PC-9 (cell line): ENCODE measurements at regions of chr3 and their contacts with region 1.

Region 1: DNA sequence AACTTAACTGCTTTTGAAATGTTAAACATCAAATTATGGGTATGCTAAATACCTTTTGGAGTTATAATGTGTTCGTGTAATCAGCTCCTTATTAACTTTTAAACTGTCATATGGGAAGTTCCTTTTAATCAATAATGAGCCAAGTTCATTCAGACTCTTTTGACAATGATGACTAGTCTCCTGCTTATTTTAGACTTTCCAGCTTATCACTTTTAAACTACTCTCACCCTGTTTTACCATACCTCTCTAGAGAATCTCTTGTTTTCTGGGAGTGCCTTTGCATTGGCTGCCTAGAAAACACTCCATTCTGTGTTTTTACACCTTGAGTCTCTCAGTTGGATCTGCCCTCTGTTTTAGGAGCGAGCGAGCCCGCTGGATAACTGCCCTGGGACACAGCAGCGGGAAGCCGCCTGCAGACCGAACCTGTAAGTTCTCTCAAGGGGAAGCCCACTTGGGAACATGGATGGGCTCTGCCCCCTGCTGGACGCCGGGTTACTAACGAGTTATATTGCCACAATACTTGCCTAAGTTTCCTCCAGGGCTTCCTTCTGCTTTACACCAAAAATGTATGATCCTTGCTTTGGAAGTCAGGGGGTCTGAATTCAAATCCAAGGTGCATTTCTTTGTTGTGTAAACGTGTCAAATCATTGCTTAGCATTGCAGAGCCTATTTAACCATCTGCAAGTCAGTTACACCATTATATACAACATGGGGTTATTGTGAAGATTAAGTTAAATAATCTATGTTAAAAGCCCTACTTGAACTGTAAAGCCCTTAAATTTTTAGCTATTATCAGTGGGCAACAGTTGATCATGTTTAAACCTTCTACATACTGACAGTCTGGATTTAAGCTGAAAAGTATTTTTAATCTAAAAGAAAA is 71.3 kb downstream of the DHX36 start:
- DNase-seq: peak; percentile 60 to 85
- H3K4me3 ChIP-seq: no peak overlapping the region
- H3K27ac ChIP-seq: no peak overlapping the region
- H3K4me1 ChIP-seq: no peaks in the 10 kb centered on the region
- H3K27me3 ChIP-seq: no peaks in the 10 kb centered on the region
- CTCF ChIP-seq: peak; percentile 95

Region 2: DNA sequence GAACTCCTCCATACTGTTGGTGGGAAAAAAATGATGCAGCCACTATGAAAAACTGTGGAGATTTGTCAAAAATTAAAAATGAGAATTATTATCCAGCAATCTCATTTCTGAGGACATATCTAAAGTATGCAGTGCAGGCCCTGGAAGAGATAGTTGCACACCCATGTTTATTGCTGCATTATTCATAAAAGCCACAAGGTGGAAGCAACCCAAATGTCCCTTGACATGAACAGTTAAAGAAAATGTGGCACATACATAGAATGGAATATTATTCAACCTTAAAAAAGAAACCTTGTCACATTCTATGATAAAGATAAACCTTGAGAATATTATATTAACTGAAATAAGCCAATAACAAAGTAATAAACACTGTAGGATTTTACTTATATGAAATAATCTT is 212.7 kb before region 1 on chr3:
- CTCF ChIA-PET with region 1: no interaction called
- POLR2A ChIA-PET with region 1: no interaction called
- intact Hi-C with region 1: loop called (anchors 1 kb)
- DNase-seq: no peak
- H3K4me3 ChIP-seq: no peak overlapping the region
- H3K27ac ChIP-seq: no peak overlapping the region
- H3K4me1 ChIP-seq: no peaks in the 10 kb centered on the region
- H3K27me3 ChIP-seq: no peaks in the 10 kb centered on the region
- CTCF ChIP-seq: peak; percentile 70

Region 3: DNA sequence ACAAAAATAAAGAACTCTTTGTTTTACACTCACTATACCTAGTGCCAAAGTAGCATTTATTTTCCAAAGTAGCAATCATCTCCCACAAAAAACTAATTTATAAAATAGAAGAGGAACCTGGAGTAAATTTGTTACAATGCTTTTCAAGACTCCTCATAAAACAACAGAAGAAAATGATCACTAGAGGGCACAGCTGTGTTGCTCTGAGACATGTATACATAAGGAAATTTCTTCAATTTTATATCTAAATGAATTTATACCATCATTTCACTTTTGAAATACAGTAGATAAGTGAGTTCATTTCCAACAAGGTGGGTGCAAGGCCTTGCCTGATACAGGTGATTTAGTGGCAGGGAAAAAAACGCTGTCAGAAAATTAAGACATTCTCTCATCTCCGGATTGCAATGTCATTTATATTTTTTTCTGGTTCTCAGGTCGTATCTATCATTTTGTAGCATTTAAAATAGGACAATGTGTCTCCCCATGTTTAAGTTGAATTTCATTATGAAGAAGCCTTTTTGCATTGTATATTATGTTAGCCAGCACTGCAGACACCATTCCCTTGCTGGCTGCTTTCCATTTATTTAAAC is 157.1 kb before region 1 on chr3:
- CTCF ChIA-PET with region 1: no interaction called
- POLR2A ChIA-PET with region 1: no interaction called
- intact Hi-C with region 1: loop called (anchors 1 kb)
- DNase-seq: no peak
- H3K4me3 ChIP-seq: no peak overlapping the region
- H3K27ac ChIP-seq: no peak overlapping the region
- H3K4me1 ChIP-seq: 0 out of 2 replicates have a peak, but pooled peaks cover 1% of the 10 kb centered on the region
- H3K27me3 ChIP-seq: no peaks in the 10 kb centered on the region
- CTCF ChIP-seq: peak; percentile 69

Region 4: DNA sequence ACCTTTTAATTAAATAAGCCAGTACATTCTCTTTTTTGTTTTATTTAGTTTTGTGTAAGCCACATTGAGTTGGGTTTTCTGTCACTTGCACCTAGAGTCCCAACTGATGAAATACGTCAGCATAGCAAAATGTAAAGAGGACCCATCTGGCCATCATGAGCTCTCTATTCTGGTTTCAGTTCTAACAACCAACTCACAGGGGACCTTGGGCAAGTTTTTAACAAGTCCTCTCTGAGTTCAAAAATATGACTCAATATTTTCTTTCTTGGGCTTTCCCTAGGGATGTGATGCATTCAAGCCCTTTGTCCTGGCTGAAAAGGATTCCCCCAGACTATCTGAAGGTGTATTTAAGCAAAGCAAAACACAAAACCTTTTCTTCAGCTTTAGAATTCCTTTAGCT is 1459.0 kb after region 1 on chr3:
- CTCF ChIA-PET with region 1: interaction called, 17 read pairs
- POLR2A ChIA-PET with region 1: no interaction called
- intact Hi-C with region 1: no loop called
- DNase-seq: no peak
- H3K4me3 ChIP-seq: no peak overlapping the region
- H3K27ac ChIP-seq: no peak overlapping the region
- H3K4me1 ChIP-seq: no peaks in the 10 kb centered on the region
- H3K27me3 ChIP-seq: no peaks in the 10 kb centered on the region
- CTCF ChIP-seq: no peak